Endothelial cell of umbilical vein (primary cell): ENCODE measurements at regions of chr14 and their contacts with region 1.

Region 1: DNA sequence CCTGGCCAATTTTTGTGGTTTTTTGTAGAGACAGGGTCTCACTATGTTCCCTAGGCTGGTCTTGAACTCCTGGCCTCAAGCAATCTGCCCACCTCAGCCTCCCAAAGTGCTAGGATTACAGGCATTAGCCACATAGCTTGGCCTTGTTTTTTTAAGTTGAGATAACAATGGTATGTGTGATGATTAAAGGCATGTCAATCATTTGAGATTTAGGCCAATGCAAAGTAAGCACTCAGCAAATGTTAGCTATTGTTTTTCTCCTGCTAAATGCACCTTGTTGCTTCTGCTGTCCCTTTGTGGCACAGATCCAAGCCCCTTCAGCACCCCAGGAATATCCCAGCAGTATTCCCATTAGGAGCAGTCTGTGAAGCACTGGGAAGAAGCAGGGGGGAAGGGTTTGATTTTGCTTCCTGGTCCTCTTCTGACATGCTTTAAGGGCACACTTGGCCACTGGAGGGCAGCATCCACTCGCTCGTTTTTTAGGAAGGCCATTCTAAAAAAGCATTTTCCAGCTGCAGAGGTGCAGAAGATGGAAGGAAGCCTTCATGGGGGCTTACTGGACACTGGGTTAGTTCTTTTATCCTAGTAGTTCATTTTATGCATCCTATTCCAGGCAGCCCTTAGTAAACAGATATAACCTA is 70.2 kb upstream of the ZFP36L1 start:
- DNase-seq: peak; percentile 83
- H3K4me3 ChIP-seq: no peak overlapping the region
- H3K27ac ChIP-seq: no peak overlapping the region
- H3K4me1 ChIP-seq: no peaks in the 10 kb centered on the region
- H3K27me3 ChIP-seq: no peaks in the 10 kb centered on the region
- CTCF ChIP-seq: peak; percentile 77 to 78
- POLR2A ChIP-seq: no peak

Region 2: DNA sequence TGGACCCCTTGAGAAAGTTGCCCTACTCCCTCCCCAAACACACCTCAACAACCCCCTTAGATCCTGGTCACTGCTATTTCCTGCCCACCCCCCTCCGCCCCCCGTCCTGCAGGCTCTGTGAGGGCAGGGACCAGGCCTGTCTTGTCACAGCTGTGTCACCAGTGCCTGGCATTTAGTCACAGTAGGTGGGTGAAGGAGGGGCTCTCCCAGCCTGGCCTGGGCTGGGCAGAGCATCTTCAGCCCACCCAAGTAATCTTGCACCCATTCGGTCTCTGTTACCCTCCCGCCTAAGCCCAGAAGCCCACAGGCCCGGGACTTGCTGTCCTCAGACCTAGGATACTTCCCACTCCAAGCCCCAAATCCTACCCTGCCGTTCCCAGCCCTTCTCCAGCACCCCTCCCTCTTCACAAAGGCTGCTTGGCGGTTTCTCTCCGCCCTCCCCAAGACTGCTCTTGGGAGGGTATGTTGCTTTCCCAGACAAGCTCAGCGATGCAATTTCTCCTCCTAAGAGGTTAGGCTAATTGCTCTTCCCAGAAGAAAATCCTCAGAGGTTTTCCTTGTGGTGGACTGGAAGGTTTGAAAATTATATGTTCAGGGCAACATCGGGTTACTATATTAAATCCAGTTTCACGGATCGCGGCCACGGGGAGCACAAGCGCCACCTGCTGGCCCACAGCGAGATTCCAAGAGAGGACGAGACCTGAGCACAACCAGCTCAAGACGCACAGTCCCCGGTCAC is 19.4 kb before region 1 on chr14:
- CTCF ChIA-PET with region 1: interaction called, 11 read pairs
- POLR2A ChIA-PET with region 1: no interaction called
- dilution Hi-C with region 1: no loop called
- intact Hi-C with region 1: no loop called
- DNase-seq: peak; percentile 75
- H3K4me3 ChIP-seq: no peak overlapping the region
- H3K27ac ChIP-seq: no peak overlapping the region
- H3K4me1 ChIP-seq: peaks cover 14% of the 10 kb centered on the region
- H3K27me3 ChIP-seq: no peaks in the 10 kb centered on the region
- CTCF ChIP-seq: peak; percentile 92 to 95
- POLR2A ChIP-seq: no peak

Region 3: DNA sequence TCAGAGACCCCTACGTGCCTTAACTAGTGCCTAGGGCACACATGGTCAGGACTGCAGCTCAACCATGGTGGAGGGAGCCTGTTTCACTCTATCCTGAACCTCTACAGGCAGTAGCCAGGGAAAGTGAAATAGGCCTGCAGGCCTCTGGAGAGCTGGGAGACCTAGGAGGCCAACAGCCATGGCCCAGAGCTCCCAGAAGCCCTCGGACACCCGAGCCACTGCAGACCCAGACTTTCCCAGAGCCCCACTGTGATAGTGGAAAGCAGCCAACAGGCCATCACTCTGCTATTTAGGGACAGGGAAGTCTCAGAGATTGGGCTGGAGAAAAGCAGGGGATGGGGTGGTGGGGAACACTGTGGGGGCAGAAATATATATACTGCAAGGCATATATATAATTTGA is 13.7 kb before region 1 on chr14:
- CTCF ChIA-PET with region 1: interaction called, 11 read pairs
- POLR2A ChIA-PET with region 1: no interaction called
- dilution Hi-C with region 1: no loop called
- intact Hi-C with region 1: no loop called
- DNase-seq: no peak
- H3K4me3 ChIP-seq: no peak overlapping the region
- H3K27ac ChIP-seq: no peak overlapping the region
- H3K4me1 ChIP-seq: no peaks in the 10 kb centered on the region
- H3K27me3 ChIP-seq: no peaks in the 10 kb centered on the region
- CTCF ChIP-seq: no peak
- POLR2A ChIP-seq: no peak

Region 4: DNA sequence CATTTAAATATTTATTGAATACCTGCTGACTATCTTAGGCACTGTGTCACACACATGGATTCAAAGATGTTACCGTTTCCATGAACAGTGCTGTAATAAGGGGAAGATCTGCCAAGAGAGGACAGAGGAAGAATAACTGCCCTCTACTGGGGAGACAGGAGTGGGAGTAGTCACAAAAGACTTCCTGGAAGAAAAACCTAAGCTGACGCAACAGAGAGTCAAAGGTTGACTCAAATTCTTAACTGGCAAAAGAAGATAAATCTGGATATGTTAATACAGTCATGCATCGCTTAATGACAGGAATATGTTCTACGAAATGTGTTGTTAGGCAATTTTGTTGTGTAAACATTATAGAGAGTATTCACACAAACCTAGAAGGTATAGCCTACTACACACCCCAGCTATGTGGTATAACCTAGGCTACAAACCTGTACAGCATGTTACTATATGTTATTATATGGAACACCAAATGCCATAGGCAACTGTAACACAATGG is 238.3 kb after region 1 on chr14:
- CTCF ChIA-PET with region 1: interaction called, 83 read pairs
- POLR2A ChIA-PET with region 1: no interaction called
- dilution Hi-C with region 1: no loop called
- intact Hi-C with region 1: loop called (anchors 1 kb)
- DNase-seq: peak; percentile 80
- H3K4me3 ChIP-seq: no peak overlapping the region
- H3K27ac ChIP-seq: peak overlapping the region; percentile 16
- H3K4me1 ChIP-seq: peaks cover 19% of the 10 kb centered on the region
- H3K27me3 ChIP-seq: no peaks in the 10 kb centered on the region
- CTCF ChIP-seq: peak; percentile 61 to 70
- POLR2A ChIP-seq: no peak

Region 5: DNA sequence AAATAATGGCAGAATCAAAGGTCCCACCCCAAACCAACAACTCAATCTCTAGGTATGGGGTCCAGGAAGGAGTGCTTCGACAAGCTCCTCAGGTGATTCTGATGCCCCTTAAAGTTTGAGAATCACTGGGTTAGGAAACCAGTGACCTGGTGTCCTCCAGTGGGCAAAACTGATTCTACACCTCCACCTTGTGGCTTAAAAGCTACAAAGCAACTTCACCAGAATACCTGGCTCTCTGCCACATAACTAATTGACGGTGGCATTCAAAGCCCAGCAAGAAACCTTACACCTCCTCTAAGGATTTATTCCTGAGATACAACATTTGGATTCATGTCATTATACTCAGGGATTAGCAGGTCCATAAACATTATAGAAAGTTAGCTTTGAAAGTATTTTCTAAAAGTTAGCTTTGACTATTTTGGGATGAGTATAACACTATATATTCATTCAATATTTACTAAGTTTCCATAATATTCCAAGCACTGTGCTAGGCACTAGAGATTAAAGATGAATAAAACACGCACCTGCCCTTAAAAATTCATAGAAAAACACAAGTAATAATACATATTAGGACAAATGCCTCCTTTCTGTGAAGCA is 244.4 kb after region 1 on chr14:
- CTCF ChIA-PET with region 1: interaction called, 83 read pairs
- POLR2A ChIA-PET with region 1: no interaction called
- dilution Hi-C with region 1: no loop called
- intact Hi-C with region 1: loop called (anchors 1 kb)
- DNase-seq: peak; percentile 76
- H3K4me3 ChIP-seq: no peak overlapping the region
- H3K27ac ChIP-seq: no peak overlapping the region
- H3K4me1 ChIP-seq: peaks cover 2% of the 10 kb centered on the region
- H3K27me3 ChIP-seq: no peaks in the 10 kb centered on the region
- CTCF ChIP-seq: peak; percentile 58 to 73
- POLR2A ChIP-seq: no peak